ENCODE measurements at regions of chr1 and their contacts with region 1.

Region 1: GRCh38 chr1:181166377-181167196 is 78.1 kb downstream of the IER5 start:
- DNase-seq: peak; percentile 67
- ATAC-seq: peak; percentile 100
- H3K4me3 ChIP-seq: peak overlapping the region in 1 of 2 experiments; percentile 32; a peak in 2 of 4 replicates
- H3K27ac ChIP-seq: no peak overlapping the region
- H3K4me1 ChIP-seq: no peaks in the 10 kb centered on the region
- H3K27me3 ChIP-seq: no peaks in the 10 kb centered on the region
- CTCF ChIP-seq: peak; percentile 90

Region 2: DNA sequence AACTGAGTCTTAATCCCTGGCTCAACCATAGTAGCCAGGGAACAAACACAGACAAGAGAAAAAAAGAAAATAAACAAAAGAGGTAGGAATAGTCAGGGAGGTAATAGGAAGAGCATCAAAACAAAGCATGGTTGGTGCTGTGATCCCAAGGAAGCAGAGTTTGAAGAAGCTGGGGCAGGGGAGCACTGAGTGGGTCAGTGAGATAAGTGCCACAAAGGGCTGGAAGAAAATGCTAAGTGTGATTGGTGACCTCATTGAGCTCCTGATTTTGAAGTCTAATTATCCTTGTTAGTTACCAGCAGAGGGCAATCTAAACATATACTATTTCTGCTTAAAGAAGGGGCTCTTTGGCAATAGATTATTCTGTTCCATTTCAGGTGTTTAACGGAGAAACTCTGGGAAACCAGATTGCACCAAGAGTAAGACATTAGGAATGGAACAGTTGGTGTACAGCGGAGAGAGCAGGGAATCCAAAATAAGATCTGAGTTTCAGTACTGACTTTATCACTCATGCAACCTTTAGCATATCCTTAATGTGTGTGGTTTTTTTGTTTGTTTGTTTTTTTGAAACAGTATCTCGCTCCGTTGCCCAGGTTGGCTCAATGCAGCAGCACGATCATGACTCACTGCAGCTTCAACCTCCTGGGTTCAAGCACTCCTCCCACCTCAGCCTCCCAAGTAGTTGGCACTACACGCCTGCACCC is 284.6 kb before region 1 on chr1:
- CTCF ChIA-PET with region 1: interaction called, 11 read pairs
- POLR2A ChIA-PET with region 1: interaction called, 3 read pairs
- in situ Hi-C with region 1: no loop called
- intact Hi-C with region 1: loop called (anchors 2 kb)
- DNase-seq: peak; percentile 20
- ATAC-seq: peak; percentile 79
- H3K4me3 ChIP-seq: no peak overlapping the region
- H3K27ac ChIP-seq: no peak overlapping the region
- H3K4me1 ChIP-seq: no peaks in the 10 kb centered on the region
- H3K27me3 ChIP-seq: no peaks in the 10 kb centered on the region
- CTCF ChIP-seq: peak; percentile 69

Region 3: GRCh38 chr1:180954005-180954800 is 212.4 kb before region 1 on chr1:
- CTCF ChIA-PET with region 1: no interaction called
- POLR2A ChIA-PET with region 1: no interaction called
- in situ Hi-C with region 1: no loop called
- intact Hi-C with region 1: loop called (anchors 10 kb)
- DNase-seq: no peak
- ATAC-seq: peak; percentile 88
- H3K4me3 ChIP-seq: peak overlapping the region; percentile 50 to 57
- H3K27ac ChIP-seq: no peak overlapping the region; the same call in 1 of the 2 replicates
- H3K4me1 ChIP-seq: peaks cover 5% of the 10 kb centered on the region
- H3K27me3 ChIP-seq: no peaks in the 10 kb centered on the region
- CTCF ChIP-seq: no peak

Region 4: DNA sequence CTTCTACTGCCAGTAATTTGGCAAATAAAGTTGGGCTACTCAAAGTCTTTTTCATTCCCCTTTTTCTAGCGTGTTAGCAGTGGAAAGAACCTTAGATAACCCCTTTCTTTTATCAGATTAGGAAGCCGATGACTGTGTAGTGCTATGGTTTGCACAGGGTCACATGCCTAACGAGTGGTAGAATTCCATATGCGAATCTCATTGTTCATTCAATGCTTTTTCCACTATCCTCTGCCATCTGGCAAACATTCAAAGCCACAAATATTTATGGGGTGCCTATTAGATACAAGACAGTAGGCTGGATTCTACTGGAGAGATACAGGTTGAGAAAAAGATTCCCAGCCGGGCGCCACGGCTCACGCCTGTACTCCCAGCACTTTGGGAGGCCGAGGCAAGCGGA is 92.9 kb before region 1 on chr1:
- CTCF ChIA-PET with region 1: no interaction called
- POLR2A ChIA-PET with region 1: no interaction called
- in situ Hi-C with region 1: no loop called
- intact Hi-C with region 1: no loop called
- DNase-seq: no peak
- ATAC-seq: peak; percentile 24; the same call in 1 of the 2 replicates
- H3K4me3 ChIP-seq: no peak overlapping the region
- H3K27ac ChIP-seq: no peak overlapping the region
- H3K4me1 ChIP-seq: 0 out of 2 replicates have a peak, but pooled peaks cover 3% of the 10 kb centered on the region
- H3K27me3 ChIP-seq: no peaks in the 10 kb centered on the region
- CTCF ChIP-seq: no peak

Measured in Panc1 (cell line).